Dendritic cell treated with granulocyte-macrophage colony-stimulating factor and Interleukin-4, amounts not matched to agents 40 ng/mL and 50 ng/mL, for 4 days (primary cell): ENCODE measurements at regions of chr2 and their contacts with region 1.

Region 1: GRCh38 chr2:176960721-176961120 is 251.9 kb upstream of the HNRNPA3 start:
- H3K4me3 Mint-ChIP-seq: no peak overlapping the region
- H3K27ac Mint-ChIP-seq: no peak overlapping the region
- H3K4me1 Mint-ChIP-seq: peaks cover 6% of the 10 kb centered on the region
- H3K27me3 Mint-ChIP-seq: peaks cover 1% of the 10 kb centered on the region

Region 2: DNA sequence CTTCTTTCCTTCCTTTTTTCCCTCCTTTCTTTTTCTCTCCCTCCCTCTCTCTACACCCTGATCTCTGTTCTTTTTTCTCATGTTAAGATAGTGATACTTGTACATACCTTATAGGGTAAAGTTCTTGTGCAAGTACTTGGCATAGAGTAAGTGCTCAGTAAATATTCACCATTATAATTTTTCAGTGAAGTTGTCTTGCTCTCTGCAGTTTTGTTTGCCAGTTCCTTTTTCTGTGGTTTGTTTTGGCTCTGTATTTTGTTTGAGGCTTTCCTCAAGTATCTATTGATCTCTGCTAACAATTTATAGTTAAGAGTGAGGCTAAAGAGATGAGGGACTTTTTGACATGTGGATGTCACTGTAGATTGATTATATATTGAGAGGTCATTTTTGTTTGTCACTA is 643.5 kb before region 1 on chr2:
- intact Hi-C with region 1: no loop called
- H3K4me3 Mint-ChIP-seq: no peak overlapping the region
- H3K27ac Mint-ChIP-seq: no peak overlapping the region
- H3K4me1 Mint-ChIP-seq: peaks cover 5% of the 10 kb centered on the region
- H3K27me3 Mint-ChIP-seq: no peaks in the 10 kb centered on the region

Region 3: DNA sequence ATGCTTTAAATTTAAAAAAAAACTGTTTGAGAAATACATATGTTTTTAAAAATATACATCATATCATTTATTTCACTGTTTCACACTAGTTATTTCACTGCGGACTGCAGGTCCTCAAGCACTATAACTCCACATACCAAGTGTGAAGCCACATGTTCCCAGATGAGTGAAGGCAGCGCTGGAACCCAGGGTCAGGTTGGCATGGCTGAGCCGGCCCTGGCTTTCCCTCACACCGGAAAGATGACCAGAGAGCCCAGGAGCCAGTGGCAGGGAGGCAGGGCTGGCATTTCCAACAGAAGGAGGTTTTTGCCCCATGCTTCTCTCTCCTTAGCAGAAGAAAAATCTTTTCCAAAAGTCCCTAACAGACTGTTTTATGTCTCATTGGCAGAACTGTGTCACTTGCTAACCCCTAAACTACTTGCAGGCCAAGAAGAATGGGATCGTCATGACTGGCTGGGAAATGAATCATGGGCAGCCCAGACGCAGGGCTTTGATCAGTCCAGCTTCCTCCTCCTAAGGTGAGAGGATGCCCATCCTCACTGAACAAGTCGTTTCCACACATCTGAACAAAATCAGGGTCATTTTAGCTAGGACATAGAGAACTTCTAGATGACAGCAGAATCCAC is 35.7 kb before region 1 on chr2:
- intact Hi-C with region 1: no loop called
- H3K4me3 Mint-ChIP-seq: no peak overlapping the region
- H3K27ac Mint-ChIP-seq: no peak overlapping the region
- H3K4me1 Mint-ChIP-seq: no peaks in the 10 kb centered on the region
- H3K27me3 Mint-ChIP-seq: no peaks in the 10 kb centered on the region

Region 4: DNA sequence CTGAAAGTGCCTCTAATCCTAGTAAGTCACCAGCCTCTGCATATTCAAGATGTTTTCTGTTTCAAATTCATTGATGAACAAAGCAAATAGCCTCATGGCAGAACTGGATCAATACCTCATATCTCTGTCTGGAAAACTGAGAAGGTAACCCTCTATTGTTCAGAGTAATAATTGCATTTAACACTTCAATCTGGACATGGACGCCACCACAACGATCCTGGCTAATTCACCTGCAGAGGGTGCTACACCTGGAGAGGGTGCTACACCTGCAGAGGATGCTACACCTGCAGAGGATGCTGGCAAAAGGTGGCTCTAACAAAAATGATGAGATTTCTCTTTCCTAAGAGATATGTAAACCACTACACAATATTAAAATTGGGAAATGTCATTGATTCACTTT is 68.8 kb after region 1 on chr2:
- intact Hi-C with region 1: loop called (anchors 10 kb)
- H3K4me3 Mint-ChIP-seq: no peak overlapping the region
- H3K27ac Mint-ChIP-seq: no peak overlapping the region
- H3K4me1 Mint-ChIP-seq: no peaks in the 10 kb centered on the region
- H3K27me3 Mint-ChIP-seq: no peaks in the 10 kb centered on the region

Region 5: DNA sequence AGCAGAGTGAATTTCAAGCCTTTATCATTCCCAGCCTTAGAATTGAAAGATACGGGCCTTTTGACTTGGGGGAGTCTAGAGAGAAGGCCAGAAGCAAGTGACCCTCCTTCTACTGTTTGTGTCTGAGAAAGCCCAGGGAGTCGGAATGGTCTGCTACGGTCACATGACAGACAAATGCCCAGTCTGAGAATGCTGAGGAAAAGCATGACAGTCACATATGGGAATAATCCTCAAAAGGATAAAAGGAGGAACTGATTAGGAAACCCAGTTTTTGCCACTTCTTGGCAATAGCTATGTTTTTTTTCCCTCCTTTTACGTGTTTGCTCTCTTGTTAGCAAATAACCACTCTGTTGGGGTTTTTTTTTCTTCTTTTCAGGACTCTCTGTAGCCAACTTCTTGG is 213.8 kb after region 1 on chr2:
- intact Hi-C with region 1: no loop called
- H3K4me3 Mint-ChIP-seq: no peak overlapping the region
- H3K27ac Mint-ChIP-seq: no peak overlapping the region
- H3K4me1 Mint-ChIP-seq: peaks cover 26% of the 10 kb centered on the region
- H3K27me3 Mint-ChIP-seq: peaks cover 2% of the 10 kb centered on the region